Breast epithelium (tissue), 4 donors: ENCODE measurements at regions of chr1 and their contacts with region 1.

Region 1: DNA sequence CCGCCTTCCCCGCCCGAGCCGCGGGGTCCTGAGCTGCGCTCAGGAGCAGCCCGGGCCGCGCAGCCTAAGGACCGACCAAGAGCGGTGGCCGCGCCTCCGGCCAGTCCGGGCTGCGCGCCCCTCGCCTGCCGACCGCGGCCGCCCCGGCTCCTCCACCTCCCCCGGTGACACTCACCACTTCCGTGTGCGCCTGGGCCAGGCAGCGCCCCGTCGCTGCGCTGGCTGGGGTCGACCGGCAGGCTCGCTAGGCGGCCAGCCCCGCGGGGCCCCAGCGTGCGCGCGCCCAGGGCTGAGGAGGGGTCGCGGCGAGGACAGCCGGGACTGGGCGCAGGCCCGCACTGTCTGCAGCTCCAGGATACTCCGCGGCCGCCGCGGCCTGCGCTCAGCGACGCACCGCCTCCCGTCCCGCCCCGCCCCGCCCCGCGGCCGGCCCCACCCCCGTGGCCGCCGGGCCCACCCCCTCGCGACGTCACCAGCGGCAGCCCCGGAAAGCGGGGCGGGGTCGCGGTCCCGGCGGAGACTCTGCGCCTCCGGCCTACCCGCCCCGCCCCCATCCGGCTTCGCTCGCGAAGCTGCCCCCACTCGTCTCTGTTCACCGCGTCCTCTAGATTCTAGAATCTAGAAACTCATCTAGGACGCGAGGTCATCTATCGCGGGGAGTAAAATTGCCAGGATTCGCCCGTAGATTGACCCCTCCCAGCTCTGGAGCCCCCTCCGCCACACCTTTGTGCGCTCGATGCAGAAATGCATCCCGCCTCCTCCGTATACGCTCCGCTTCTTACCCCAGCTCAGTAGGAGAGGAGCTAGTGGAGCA is at the start of gene JAK1:
- DNase-seq: peak; percentile 67 to 81
- H3K4me3 ChIP-seq: peak within 1 kb of the TSS; percentile 66 to 96 (median 95)
- H3K27ac ChIP-seq: peak within 1 kb of the TSS; percentile 97 to 98
- H3K4me1 ChIP-seq: no peaks in the 10 kb centered on the region
- H3K27me3 ChIP-seq: no peaks in the 10 kb centered on the region
- CTCF ChIP-seq: no peak
- POLR2A ChIP-seq: no peak
- total RNA-seq, gene JAK1: 179 to 258 (median 196) TPM

Region 2: GRCh38 chr1:64864018-64864940 is 102.1 kb before region 1 on chr1:
- intact Hi-C with region 1: loop called (anchors 10 kb)
- DNase-seq: peak in 1 of 2 donors; percentile 43
- H3K4me3 ChIP-seq: no peak overlapping the region
- H3K27ac ChIP-seq: peak overlapping the region; percentile 4 to 46
- H3K4me1 ChIP-seq: no peaks in the 10 kb centered on the region
- H3K27me3 ChIP-seq: no peaks in the 10 kb centered on the region
- CTCF ChIP-seq: no peak
- POLR2A ChIP-seq: no peak